IMR-90 (cell line): ENCODE measurements at regions of chr12 and their contacts with region 1.

Region 1: DNA sequence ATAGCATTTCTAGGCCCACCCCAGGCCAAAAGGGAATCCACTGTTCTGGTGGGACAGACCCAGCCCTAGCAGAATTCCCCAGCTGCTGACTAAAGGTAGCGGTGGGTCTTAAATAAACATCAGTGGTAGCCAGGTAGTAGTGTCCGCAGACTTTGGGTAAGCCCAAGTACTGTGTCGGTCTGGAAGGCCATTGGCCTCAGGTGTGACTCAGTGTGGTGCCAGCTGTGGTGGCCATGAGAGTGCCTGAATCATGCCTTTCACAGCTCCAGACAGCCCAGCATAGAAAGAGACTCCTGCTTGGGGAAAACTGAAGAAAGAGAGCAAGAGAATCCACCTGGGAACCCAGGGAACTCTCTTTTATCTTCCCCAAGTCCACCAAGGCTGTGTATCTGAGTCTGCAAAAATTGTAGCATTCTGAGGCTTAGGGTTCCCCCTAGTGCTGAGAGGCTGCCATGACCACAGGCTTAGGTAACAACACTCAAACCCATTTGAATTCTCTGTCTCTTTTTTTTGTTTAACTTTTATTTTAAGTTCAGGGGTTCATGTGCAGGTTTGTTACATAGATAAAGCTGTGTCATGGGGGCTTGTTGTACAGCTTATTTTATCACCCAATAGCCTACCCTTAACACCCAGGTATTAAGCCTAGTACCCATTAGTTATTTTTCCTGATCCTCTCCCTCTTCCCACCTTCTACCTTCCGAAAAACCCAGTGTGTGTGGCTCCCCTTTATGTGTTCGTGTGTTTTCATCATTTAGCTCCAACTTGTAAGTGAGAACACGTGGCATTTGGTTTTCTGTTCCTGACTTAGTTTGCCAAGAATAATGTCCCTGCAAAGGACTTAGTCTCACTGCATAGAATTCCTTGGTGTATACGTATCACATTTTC is 16.7 kb upstream of the CD163L1 start:
- DNase-seq: peak; percentile 51
- ATAC-seq: peak; percentile 94
- H3K4me3 ChIP-seq: no peak overlapping the region
- H3K27ac ChIP-seq: no peak overlapping the region
- H3K4me1 ChIP-seq: no peaks in the 10 kb centered on the region
- H3K27me3 ChIP-seq: no peaks in the 10 kb centered on the region
- CTCF ChIP-seq: peak; percentile 92
- POLR2A ChIP-seq: peak; percentile 38; the same call in 1 of the 2 replicates
- RAD21 ChIP-seq: peak; percentile 91

Region 2: DNA sequence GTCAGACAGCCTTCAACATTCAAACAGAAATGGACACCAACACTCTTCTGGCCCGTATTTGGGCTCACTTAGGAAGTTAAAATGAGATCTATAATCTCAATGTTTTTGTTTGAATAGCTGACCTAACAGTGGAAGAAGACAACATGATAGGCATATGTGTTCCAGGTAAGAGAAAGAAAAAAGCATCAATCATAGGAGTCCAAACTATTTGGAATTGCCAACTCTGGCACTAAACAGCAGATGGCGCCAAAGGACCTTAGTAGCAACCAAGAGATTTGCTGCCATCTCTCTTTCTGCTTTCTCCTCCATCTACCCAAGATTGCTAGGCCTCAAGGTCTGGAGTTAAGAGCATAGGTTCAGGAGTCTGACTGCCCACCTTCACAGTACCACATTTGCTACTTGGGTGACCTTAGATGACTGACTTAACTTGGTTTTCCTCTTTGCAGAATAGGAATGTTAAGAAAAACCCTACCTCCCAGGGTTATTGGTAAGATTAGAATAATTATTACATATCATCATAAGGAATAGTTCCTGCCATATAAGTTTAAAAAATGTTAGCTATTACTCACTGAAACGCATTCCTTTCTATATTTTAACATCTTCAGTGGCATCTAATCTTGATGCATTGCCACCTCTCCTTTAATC is 240.9 kb before region 1 on chr12:
- CTCF ChIA-PET with region 1: no interaction called
- POLR2A ChIA-PET with region 1: no interaction called
- dilution Hi-C with region 1: no loop called
- in situ Hi-C with region 1: loop called (anchors 5 kb)
- intact Hi-C with region 1: loop called (anchors 1 kb)
- DNase-seq: peak; percentile 73
- ATAC-seq: peak; percentile 82
- H3K4me3 ChIP-seq: no peak overlapping the region
- H3K27ac ChIP-seq: no peak overlapping the region
- H3K4me1 ChIP-seq: no peaks in the 10 kb centered on the region
- H3K27me3 ChIP-seq: peaks cover 9% of the 10 kb centered on the region
- CTCF ChIP-seq: peak; percentile 97
- POLR2A ChIP-seq: 0 out of 2 replicates have a peak, but pooled peaks have one; percentile 44
- RAD21 ChIP-seq: peak; percentile 99

Region 3: DNA sequence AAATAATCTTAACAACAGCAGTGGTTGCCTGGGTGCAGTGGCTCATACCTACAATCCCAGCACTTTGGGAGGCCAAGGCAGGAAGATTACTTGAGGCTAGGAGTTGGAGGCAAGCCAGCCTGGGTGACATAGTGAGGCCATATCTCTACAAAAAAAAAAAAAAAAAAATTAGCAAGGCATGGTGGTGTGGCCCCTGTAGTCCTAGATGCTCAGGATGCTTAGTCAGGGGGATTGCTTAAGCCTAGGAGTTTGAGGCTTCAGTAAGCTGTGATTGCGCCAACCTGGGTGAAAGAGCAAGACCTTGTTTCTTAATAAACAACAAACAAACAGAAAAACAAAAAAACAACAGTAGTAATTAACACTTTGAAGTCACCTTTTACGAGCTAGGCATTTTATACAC is 157.4 kb before region 1 on chr12:
- CTCF ChIA-PET with region 1: no interaction called
- POLR2A ChIA-PET with region 1: no interaction called
- dilution Hi-C with region 1: no loop called
- in situ Hi-C with region 1: no loop called
- intact Hi-C with region 1: no loop called
- DNase-seq: no peak
- ATAC-seq: no peak
- H3K4me3 ChIP-seq: no peak overlapping the region
- H3K27ac ChIP-seq: no peak overlapping the region
- H3K4me1 ChIP-seq: no peaks in the 10 kb centered on the region
- H3K27me3 ChIP-seq: no peaks in the 10 kb centered on the region
- CTCF ChIP-seq: no peak
- POLR2A ChIP-seq: no peak
- RAD21 ChIP-seq: no peak

Region 4: DNA sequence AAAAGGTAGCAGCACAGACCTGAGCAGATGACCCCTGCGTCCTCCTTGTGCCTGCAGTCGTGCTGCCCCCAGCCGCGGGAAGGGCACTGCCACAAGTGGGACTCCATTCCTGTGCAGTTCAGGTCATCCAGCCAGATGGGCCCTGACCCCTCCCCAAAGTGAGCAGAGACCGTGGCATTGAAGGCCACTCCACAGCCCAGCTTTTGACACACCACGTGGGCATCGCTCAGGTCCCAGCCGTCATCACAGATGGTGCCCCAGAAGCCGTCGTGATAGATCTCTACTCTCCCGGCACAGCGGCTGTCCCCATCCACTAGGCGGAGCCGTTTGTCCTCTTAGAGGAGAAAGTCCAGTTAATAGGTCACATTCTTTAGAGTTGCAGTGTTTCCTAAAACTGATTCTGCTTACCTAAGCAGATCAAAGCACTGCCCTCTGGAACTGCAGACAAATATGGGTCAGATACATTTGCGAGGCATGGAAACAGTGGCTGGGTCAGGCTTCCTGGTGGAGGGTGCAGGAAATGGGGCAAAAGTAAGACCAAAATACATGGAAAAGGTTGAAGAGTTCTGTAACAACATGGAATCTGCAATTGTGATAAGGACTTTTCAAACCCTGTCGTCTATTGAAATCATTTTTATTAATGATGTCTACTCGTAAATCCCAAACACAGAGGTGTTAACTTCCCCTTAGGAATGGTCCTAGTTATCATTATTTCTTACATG is 86.0 kb before region 1 on chr12:
- CTCF ChIA-PET with region 1: interaction called, 3 read pairs
- POLR2A ChIA-PET with region 1: no interaction called
- dilution Hi-C with region 1: no loop called
- in situ Hi-C with region 1: no loop called
- intact Hi-C with region 1: loop called (anchors 5 kb)
- DNase-seq: peak; percentile 6
- ATAC-seq: no peak; the same call in 1 of the 2 replicates
- H3K4me3 ChIP-seq: no peak overlapping the region
- H3K27ac ChIP-seq: no peak overlapping the region
- H3K4me1 ChIP-seq: no peaks in the 10 kb centered on the region
- H3K27me3 ChIP-seq: no peaks in the 10 kb centered on the region
- CTCF ChIP-seq: peak; percentile 51
- POLR2A ChIP-seq: no peak
- RAD21 ChIP-seq: peak; percentile 48